Ovary (tissue), 10 donors: ENCODE measurements at regions of chr12 and their contacts with region 1.

Region 1: GRCh38 chr12:67957383-67957782 is 31.9 kb upstream of the IFNG-AS1 start:
- DNase-seq: no peak
- H3K4me3 ChIP-seq: no peak overlapping the region
- H3K27ac ChIP-seq: no peak overlapping the region
- H3K4me1 ChIP-seq: no peaks in the 10 kb centered on the region
- H3K27me3 ChIP-seq: no peaks in the 10 kb centered on the region
- CTCF ChIP-seq: no peak
- EP300 ChIP-seq: no peak
- POLR2A ChIP-seq: no peak

Region 2: DNA sequence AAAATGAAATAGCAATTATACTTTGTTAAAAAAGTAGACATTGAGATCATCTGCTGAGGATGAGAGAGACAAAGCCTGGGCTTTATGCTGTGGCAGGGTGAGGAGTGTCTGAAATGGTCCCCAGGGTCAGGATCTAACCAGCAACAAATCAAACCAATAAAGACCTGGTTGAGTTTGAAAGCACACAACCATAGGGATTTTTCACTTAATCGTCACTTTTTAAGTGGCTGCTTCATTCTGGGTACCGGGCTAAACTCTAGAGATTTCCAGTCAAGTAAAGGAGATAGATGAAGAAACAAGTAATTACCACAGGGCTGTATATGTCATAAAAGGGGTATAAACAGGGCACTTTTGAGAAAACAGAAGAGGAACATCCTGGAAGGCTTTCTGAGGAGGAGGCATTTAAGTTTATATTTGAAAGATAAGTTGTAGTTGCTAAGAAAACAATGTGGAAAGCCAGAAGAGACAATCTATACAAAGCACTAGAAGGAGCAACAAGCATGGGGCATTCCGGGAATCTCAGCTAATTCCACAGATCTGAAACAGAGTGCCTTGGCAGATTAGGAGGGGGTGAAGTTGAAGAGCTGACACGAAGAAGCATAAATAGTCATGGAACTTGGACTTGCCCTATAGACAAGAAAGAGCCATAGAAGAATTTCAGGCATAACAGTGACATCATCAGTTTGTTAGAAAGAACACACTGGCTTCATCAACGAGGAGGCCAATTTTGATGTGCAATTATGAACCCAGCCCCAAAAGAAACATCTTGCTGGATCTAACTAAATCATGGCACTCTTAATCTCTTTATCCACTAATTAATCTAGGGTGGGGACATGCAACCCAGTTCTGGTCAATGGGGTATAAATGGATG is 1465.9 kb after region 1 on chr12:
- intact Hi-C with region 1: loop called in 1 of 4 experiments (anchors 5 kb)
- DNase-seq: no peak
- H3K4me3 ChIP-seq: no peak overlapping the region
- H3K27ac ChIP-seq: no peak overlapping the region
- H3K4me1 ChIP-seq: no peaks in the 10 kb centered on the region
- H3K27me3 ChIP-seq: no peaks in the 10 kb centered on the region
- CTCF ChIP-seq: no peak
- EP300 ChIP-seq: no peak
- POLR2A ChIP-seq: no peak